ENCODE measurements at regions of chr17 and their contacts with region 1.

Region 1: DNA sequence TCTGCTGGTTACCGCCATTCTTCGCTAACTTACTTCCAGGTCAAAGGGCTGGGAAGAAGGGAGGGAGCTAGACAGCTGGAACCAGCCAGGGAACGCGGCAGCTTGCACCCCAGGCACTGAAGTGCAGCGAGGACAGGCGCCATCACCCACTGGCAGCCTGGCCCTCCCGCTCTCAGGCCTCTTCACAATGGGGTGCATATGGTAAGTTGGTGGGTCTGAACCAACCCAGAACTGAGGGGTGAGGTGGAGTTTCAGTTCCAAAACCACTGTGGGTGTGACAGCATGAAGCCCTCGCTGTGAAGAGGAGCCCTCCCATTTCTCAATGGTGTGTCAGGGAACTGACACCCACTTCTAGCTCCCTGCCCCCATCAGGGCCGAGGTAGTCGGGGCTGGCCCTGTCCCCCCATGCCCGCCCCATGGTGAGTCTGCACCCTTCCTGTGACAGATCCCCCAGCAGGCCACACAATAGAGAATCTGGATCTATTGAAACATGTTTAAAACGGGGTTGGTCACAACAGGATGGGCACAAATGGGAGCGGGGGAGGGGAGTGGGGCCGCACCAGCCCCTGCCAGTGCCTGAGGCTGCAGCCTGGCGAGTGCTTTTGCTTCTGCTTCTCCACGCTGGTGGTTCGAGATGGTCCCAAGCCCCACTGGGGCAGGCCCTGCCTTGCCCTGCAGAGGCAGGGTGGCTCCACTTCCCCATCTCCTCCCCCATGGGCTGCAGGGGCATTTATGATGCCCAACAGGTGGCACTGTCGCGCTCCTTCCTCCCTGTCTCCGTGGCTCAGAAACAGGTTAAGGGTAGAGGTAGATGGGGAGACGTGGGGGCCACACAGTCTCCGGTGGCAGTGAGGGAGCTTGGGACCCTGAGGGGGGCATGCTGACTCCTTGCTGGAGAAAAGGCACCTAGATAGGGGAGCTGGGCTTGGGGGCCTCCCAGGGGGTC is 2.3 kb downstream of the LIMD2 start:
- DNase-seq: peak; percentile 88
- H3K4me3 Mint-ChIP-seq: peak overlapping the region; percentile 83
- H3K27ac Mint-ChIP-seq: peak overlapping the region; percentile 92
- H3K4me1 Mint-ChIP-seq: peaks cover 62% of the 10 kb centered on the region
- H3K27me3 Mint-ChIP-seq: no peaks in the 10 kb centered on the region

Region 2: GRCh38 chr17:63445979-63446691 is 251.5 kb before region 1 on chr17 and contains the start of gene CYB561:
- CTCF ChIA-PET with region 1: no interaction called
- intact Hi-C with region 1: loop called (anchors 5 kb)
- DNase-seq: peak; percentile 66
- H3K4me3 Mint-ChIP-seq: peak within 1 kb of the TSS; percentile 67
- H3K27ac Mint-ChIP-seq: peak within 1 kb of the TSS; percentile 79
- H3K4me1 Mint-ChIP-seq: peaks cover 23% of the 10 kb centered on the region
- H3K27me3 Mint-ChIP-seq: no peaks in the 10 kb centered on the region
- total RNA-seq, gene CYB561: 2.3 to 2.6 TPM

Region 3: DNA sequence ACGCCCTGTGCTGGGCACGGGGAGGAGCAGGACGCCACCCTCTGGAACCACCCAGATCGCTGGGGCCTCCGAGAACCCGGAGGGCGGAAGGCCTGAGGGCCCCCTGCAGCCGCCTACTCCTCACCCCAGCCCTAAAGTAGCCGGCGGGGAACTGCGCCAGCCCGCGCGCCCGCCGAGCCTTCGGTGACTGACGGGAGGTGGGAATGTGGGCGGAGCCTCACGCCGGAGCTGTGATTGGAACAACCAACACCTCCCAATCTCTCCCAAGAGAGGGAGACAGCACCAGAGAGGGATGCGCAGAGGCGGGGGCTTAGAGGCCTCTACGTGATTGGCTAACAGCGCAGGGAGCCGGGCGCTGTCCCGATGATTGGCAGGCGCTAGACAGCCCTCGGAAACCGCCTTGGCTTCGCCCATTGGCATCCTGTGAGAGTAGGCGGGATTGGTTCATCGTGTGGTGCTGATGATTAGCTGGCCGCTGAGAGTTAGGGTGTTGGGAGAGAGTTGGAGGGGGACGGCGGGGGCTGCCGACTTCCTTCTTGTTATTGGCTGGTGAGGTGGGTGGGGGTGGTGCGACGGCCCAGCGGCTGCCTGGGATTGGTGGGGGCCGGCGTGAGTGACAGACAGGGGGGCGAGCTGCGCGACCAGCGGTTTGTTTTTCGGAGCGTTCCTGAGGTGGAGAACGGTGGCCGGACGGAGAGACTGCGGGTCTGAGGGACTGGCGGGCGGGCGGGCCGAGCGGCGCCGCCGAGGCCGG is 75.7 kb before region 1 on chr17 and contains the start of gene MAP3K3:
- CTCF ChIA-PET with region 1: interaction called, 6 read pairs
- intact Hi-C with region 1: loop called (anchors 1 kb)
- DNase-seq: peak; percentile 99
- H3K4me3 Mint-ChIP-seq: peak within 1 kb of the TSS; percentile 97
- H3K27ac Mint-ChIP-seq: peak within 1 kb of the TSS; percentile 82
- H3K4me1 Mint-ChIP-seq: peaks cover 35% of the 10 kb centered on the region
- H3K27me3 Mint-ChIP-seq: no peaks in the 10 kb centered on the region
- total RNA-seq, gene MAP3K3: 28.8 to 29.6 TPM

Region 4: GRCh38 chr17:63714547-63715277 is 17.1 kb after region 1 on chr17:
- CTCF ChIA-PET with region 1: interaction called, 14 read pairs
- intact Hi-C with region 1: loop called (anchors 1 kb)
- DNase-seq: no peak
- H3K4me3 Mint-ChIP-seq: no peak overlapping the region
- H3K27ac Mint-ChIP-seq: no peak overlapping the region
- H3K4me1 Mint-ChIP-seq: peaks cover 10% of the 10 kb centered on the region
- H3K27me3 Mint-ChIP-seq: no peaks in the 10 kb centered on the region

Region 5: GRCh38 chr17:63773381-63774140 is 75.9 kb after region 1 on chr17 and contains the start of gene CCDC47:
- CTCF ChIA-PET with region 1: interaction called, 8 read pairs
- intact Hi-C with region 1: loop called (anchors 1 kb)
- DNase-seq: peak; percentile 99
- H3K4me3 Mint-ChIP-seq: peak within 1 kb of the TSS; percentile 98
- H3K27ac Mint-ChIP-seq: peak within 1 kb of the TSS; percentile 100
- H3K4me1 Mint-ChIP-seq: peaks cover 58% of the 10 kb centered on the region
- H3K27me3 Mint-ChIP-seq: no peaks in the 10 kb centered on the region
- total RNA-seq, gene CCDC47: 40.5 to 42.1 TPM

Region 6: DNA sequence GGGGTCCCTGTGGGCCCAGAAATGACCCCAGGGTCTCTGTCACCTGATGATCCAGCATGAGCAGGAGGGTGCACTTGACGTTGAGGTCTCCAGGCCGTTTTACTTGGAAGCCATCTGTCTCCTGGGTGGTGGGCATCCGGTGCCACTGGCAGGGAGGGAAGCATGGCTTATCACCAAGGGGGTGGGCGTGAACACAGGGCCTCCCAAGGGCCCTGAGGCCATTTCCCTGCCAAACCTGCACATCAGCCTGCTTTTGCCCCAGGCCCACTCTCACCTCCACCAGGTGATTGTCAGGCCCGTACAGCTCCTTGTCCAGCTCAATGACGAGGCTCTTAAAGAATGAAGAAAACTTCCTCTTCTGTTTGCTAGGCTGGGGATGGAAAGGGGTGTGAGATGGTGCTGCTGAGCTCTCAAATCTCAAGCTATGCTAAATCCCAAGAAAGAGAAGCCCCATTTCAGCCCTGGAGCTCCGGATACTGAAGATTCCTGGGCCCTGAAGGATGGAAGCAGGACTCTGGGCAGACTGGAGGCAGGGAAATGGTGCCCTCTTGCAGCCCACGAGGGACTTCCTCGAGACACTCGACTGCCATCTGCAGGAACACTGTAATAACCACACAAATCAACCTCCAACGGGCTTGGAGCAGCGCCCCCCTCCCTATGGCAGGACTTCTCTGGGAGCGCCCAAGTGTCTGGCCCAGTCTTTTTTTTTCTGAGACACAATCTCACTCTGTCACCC is 137.0 kb after region 1 on chr17:
- CTCF ChIA-PET with region 1: interaction called, 3 read pairs
- intact Hi-C with region 1: loop called (anchors 1 kb)
- DNase-seq: peak; percentile 82
- H3K4me3 Mint-ChIP-seq: no peak overlapping the region
- H3K27ac Mint-ChIP-seq: peak overlapping the region; percentile 77
- H3K4me1 Mint-ChIP-seq: peaks cover 55% of the 10 kb centered on the region
- H3K27me3 Mint-ChIP-seq: no peaks in the 10 kb centered on the region

Region 7: DNA sequence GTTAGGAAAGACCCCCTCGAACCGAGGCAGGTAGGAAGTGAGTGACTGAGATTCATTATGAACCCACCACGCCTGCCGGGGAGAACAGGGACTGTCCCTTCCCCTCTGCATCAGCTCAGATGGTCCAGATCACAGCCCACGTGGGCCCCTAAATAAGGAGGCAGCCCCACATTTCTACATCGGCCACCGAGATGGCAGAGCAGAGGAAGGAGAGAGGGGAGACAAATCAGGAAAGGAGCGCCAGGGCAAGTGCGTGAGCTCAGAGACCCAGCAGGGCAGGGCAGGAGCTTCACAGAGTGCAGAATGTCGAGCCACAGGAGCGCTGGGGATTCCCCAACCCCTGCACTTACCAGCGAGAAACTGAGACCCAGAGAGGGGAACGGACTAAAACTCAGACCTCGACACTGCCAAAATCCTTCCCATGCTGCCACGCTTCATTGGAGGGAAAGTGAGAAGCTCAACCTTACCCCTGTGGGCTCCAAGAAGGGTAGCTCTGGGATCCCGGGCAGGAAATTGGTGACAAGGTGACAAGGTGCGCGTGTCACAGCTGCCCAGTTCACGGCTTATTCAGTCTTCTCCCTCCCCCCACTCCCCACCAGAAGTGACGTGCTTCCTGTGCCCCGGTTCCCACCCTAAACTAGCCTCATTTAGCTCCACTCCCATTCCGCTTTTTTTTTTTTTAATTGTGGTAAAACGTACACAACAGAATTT is 322.6 kb after region 1 on chr17 and contains the start of gene ICAM2:
- CTCF ChIA-PET with region 1: no interaction called
- intact Hi-C with region 1: loop called (anchors 2 kb)
- DNase-seq: peak; percentile 95
- H3K4me3 Mint-ChIP-seq: peak within 1 kb of the TSS; percentile 97
- H3K27ac Mint-ChIP-seq: peak within 1 kb of the TSS; percentile 98
- H3K4me1 Mint-ChIP-seq: peaks cover 62% of the 10 kb centered on the region
- H3K27me3 Mint-ChIP-seq: no peaks in the 10 kb centered on the region
- total RNA-seq, gene ICAM2: 41.6 to 41.9 TPM

Measured in activated naive CD4-positive, alpha-beta T cell treated with anti-CD3 and anti-CD28 coated beads for 36 hours (primary cell).